CD8-positive, alpha-beta T cell (primary cell): ENCODE measurements at regions of chr1 and their contacts with region 1.

Region 1: DNA sequence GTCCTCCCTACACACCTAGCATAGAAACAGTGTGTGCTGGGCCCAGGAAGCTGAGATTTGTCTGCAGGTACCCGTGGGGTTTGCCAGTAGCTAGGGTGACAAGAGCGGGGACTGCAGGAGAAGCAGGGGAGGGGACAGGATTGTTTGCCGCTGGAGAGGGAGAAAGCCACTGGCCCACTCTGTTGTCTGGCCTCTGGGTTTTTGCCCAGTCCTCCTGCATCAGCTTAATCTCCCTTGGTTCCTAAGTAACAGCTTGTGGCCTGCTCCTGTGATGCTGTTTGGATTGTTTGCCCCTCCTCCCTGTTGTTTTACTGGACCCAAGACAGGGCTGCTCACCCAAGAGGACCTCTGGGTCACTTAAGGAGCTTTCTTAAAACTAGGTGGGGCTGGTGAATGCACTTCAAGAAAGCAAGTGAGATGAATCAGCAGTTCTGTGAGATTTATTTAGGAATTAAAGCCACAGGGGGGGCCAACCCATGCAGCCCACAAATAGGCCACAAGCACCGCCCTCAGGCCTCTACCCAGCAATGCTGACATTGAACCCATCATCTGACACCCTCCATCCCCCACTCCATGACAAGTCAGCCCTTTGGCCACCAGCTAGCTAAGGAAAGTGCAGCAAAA is 142.8 kb downstream of the ZZZ3 start:
- DNase-seq: no peak
- ATAC-seq: no peak
- H3K4me3 ChIP-seq: no peak overlapping the region
- H3K4me3 Mint-ChIP-seq: no peak overlapping the region
- H3K27ac ChIP-seq: no peak overlapping the region
- H3K27ac Mint-ChIP-seq: no peak overlapping the region
- H3K4me1 ChIP-seq: no peaks in the 10 kb centered on the region
- H3K4me1 Mint-ChIP-seq: no peaks in the 10 kb centered on the region
- H3K27me3 ChIP-seq: no peaks in the 10 kb centered on the region
- H3K27me3 Mint-ChIP-seq: no peaks in the 10 kb centered on the region
- CTCF ChIP-seq: no peak

Region 2: GRCh38 chr1:75838079-75838478 is 1701.6 kb before region 1 on chr1:
- CTCF ChIA-PET with region 1: no interaction called
- POLR2A ChIA-PET with region 1: no interaction called
- intact Hi-C with region 1: loop called in 1 of 2 experiments (anchors 5 kb)
- DNase-seq: no peak
- ATAC-seq: no peak
- H3K4me3 ChIP-seq: no peak overlapping the region
- H3K4me3 Mint-ChIP-seq: no peak overlapping the region
- H3K27ac ChIP-seq: no peak overlapping the region
- H3K27ac Mint-ChIP-seq: no peak overlapping the region
- H3K4me1 ChIP-seq: no peaks in the 10 kb centered on the region
- H3K4me1 Mint-ChIP-seq: no peaks in the 10 kb centered on the region
- H3K27me3 ChIP-seq: no peaks in the 10 kb centered on the region
- H3K27me3 Mint-ChIP-seq: no peaks in the 10 kb centered on the region
- CTCF ChIP-seq: no peak

Region 3: GRCh38 chr1:77565321-77565720 is 25.7 kb after region 1 on chr1:
- CTCF ChIA-PET with region 1: no interaction called
- POLR2A ChIA-PET with region 1: no interaction called
- intact Hi-C with region 1: no loop called
- DNase-seq: no peak
- ATAC-seq: no peak
- H3K4me3 ChIP-seq: no peak overlapping the region
- H3K4me3 Mint-ChIP-seq: no peak overlapping the region
- H3K27ac ChIP-seq: no peak overlapping the region
- H3K27ac Mint-ChIP-seq: no peak overlapping the region
- H3K4me1 ChIP-seq: no peaks in the 10 kb centered on the region
- H3K4me1 Mint-ChIP-seq: peaks cover 1% of the 10 kb centered on the region
- H3K27me3 ChIP-seq: no peaks in the 10 kb centered on the region
- H3K27me3 Mint-ChIP-seq: no peaks in the 10 kb centered on the region
- CTCF ChIP-seq: no peak